PC-3 (cell line): ENCODE measurements at regions of chr10 and their contacts with region 1.

Region 1: DNA sequence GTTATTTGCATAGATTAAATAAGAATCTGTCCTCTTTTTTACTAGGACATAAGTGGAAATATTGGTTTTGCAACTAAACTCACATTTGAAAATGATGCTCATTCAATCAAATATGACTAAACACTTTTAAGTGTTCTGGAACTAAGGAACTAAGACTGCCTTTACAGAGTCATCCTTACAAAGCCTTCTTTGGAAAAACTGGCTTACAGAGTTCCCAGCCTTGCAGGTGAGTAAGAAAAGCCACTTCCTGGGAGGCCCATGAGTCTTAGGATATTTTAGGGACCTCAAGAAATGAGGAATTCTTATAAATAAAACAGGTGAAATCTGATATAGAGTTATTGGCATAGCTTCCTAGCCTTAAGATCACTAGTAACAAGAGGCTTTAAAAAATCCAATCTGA is 135.5 kb downstream of the ALOX5 start:
- DNase-seq: peak; percentile 90
- ATAC-seq: peak; percentile 96
- H3K4me3 ChIP-seq: no peak overlapping the region; the same call in 1 of the 2 replicates
- H3K27ac ChIP-seq: peak overlapping the region; percentile 99
- H3K4me1 ChIP-seq: peaks cover 43% of the 10 kb centered on the region
- H3K27me3 ChIP-seq: no peaks in the 10 kb centered on the region
- CTCF ChIP-seq: no peak

Region 2: GRCh38 chr10:45325116-45325515 is 184.4 kb before region 1 on chr10:
- CTCF ChIA-PET with region 1: no interaction called
- POLR2A ChIA-PET with region 1: no interaction called
- intact Hi-C with region 1: no loop called
- DNase-seq: no peak
- ATAC-seq: no peak
- H3K4me3 ChIP-seq: no peak overlapping the region
- H3K27ac ChIP-seq: no peak overlapping the region
- H3K4me1 ChIP-seq: no peaks in the 10 kb centered on the region
- H3K27me3 ChIP-seq: peaks cover 9% of the 10 kb centered on the region; the same call in 1 of the 2 replicates
- CTCF ChIP-seq: no peak

Region 3: DNA sequence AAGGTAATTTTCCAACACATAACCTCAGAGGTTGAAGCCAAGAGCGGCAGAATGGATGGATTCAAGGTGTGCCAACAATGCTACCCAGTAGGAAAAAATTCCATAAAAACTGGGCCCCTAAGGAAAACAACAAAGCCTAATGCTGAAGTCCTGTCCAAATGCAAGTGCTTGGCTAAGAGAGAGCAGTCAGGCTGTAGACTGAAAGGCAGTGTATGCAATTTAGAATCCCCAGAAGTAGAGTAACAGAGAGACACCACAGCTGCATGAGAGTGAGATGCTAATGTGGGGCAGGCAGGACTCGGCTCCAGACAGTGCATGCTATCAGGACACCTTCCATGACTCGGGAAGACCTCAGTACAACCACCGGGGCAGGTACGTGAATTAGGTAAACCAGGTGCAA is 38.6 kb after region 1 on chr10:
- CTCF ChIA-PET with region 1: no interaction called
- POLR2A ChIA-PET with region 1: no interaction called
- intact Hi-C with region 1: no loop called
- DNase-seq: no peak
- ATAC-seq: no peak
- H3K4me3 ChIP-seq: no peak overlapping the region
- H3K27ac ChIP-seq: no peak overlapping the region
- H3K4me1 ChIP-seq: no peaks in the 10 kb centered on the region
- H3K27me3 ChIP-seq: no peaks in the 10 kb centered on the region
- CTCF ChIP-seq: no peak

Region 4: GRCh38 chr10:45594276-45595106 is 85.0 kb after region 1 on chr10:
- CTCF ChIA-PET with region 1: no interaction called
- POLR2A ChIA-PET with region 1: no interaction called
- intact Hi-C with region 1: loop called (anchors 2 kb)
- DNase-seq: peak; percentile 95
- ATAC-seq: peak; percentile 86
- H3K4me3 ChIP-seq: peak overlapping the region; percentile 81
- H3K27ac ChIP-seq: peak overlapping the region; percentile 25; the same call in 1 of the 2 replicates
- H3K4me1 ChIP-seq: peaks cover 13% of the 10 kb centered on the region
- H3K27me3 ChIP-seq: no peaks in the 10 kb centered on the region
- CTCF ChIP-seq: no peak